ENCODE measurements at regions of chr3 and their contacts with region 1.

Region 1: GRCh38 chr3:33544126-33544525 is 103.9 kb upstream of the UBP1 start:
- DNase-seq: no peak
- H3K4me3 Mint-ChIP-seq: no peak overlapping the region
- H3K27ac Mint-ChIP-seq: no peak overlapping the region
- H3K4me1 Mint-ChIP-seq: no peaks in the 10 kb centered on the region
- H3K27me3 Mint-ChIP-seq: no peaks in the 10 kb centered on the region

Region 2: DNA sequence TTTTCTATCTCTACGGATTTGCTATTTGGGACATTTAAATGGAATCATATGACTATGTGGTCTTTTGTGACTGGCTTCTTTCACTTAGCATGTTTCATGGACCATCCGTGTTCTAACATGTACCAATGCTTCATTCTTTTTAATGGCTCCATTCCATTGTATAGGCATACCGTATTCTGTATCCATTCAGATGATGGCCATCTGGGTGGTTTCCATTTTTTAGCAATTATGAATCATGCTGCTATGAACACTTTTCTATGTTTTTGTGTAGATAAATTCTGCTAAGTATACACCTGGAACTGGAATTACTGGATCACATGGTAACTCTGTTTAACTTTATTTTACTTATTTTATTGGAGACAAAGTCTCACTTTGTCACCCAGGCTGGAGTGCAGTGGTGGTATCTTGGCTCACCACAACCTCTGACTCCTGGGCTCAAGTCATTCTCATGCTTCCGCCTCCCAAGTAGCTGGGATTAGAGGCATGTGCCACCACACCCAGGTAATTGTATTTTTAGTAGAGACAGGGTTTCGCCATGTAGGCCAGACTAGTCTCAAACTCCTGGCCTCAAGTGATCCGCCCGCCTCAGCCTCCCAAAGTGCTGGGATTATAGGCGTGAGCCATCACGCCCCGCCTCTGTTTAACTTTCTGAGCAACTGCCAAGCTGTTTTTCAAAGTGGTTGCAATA is 117.4 kb before region 1 on chr3:
- CTCF ChIA-PET with region 1: no interaction called
- POLR2A ChIA-PET with region 1: interaction called, 12 read pairs
- DNase-seq: no peak
- H3K4me3 Mint-ChIP-seq: no peak overlapping the region
- H3K27ac Mint-ChIP-seq: no peak overlapping the region
- H3K4me1 Mint-ChIP-seq: peaks cover 40% of the 10 kb centered on the region
- H3K27me3 Mint-ChIP-seq: no peaks in the 10 kb centered on the region

Measured in activated CD4-positive, alpha-beta T cell treated with anti-CD3 and anti-CD28 coated beads, Interleukin-2, amount 10 ng/mL, durations not matched to agents 7 days and 5 days (primary cell).